Left colon (tissue), 2 donors: ENCODE measurements at regions of chr10 and their contacts with region 1.

Region 1: DNA sequence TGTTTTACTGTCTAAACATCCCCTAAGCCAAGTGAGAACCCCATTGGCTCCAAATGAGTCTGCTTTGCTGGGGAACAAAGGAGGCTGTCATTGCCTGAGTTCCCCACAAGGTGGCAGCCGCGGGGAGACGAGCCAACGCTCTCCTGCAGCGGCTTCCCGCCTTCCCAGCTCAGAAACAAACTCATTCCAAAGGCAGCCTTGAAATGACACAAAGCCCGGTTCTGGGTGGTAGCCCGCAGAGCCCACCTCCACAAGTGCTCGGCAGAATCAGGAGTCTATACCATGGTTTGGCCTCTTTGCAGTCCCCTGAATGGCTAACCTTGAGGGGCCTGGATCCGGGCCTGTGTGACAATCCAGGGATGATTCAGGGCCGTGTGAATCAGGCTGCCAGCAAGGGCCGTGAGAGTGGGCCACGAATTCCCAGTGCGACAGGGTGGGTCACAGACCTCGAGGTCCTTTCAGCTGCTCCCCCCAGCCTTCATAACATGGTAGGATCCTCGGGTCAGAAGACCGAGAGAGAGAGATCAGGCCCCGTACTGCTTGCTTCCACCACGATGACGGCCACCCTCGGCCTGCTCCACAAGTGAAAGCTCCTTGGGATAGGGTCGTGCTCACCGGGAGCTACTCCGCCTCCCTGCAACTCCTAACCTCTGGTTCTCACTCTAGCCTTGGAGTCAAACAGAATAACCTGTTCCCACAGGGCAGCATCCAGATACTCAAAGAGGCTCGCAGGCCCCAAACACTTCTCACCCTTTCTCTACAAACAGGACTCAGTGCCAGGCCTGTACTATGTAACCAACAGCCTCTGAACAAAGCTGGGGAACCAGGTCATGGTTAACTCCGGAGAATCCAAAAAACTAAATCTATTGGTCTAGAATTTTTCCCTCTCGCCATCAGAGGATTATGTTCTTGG is 79.6 kb downstream of the DLG5 start:
- DNase-seq: peak; percentile 73 to 78
- ATAC-seq: peak; percentile 40

Region 2: DNA sequence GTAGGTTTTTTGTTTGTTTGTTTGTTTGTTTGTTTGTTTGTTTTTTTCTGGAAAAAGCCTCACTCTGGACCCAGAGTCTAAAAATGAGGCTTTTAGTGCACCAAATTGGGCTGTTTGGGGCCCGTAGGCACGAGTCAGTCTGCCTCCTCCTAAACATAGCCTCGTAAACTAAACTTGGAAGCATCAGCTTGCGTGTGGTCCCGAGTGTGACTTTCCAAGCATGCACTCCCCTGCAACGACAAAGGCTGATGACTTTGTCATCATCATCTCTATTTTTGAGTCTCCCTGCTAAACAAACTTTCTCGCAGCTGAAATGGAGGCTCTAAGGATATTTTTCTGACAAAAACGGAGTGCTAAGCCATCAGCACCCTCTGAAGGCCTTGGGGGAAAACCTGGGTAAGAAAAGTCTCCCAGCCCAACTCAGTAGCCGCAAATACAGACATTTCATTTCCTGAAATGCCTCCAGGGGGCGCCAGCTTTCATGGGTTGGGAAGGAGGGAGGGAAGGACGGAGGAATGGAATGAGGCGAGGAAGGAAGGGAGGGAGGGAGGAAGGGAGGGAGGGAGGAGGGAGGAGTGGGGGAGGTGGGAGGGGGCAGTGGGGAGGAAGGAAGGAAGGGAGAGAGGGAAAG is 455.3 kb before region 1 on chr10:
- intact Hi-C with region 1: no loop called
- DNase-seq: peak; percentile 67 to 74
- ATAC-seq: peak; percentile 82

Region 3: GRCh38 chr10:77756319-77757232 is 90.4 kb before region 1 on chr10:
- intact Hi-C with region 1: no loop called
- DNase-seq: peak in 1 of 2 donors; percentile 41
- ATAC-seq: peak; percentile 53

Region 4: GRCh38 chr10:77926566-77927401 is 79.8 kb after region 1 on chr10 and contains the start of gene DLG5:
- intact Hi-C with region 1: loop called in 1 of 2 experiments (anchors 10 kb)
- DNase-seq: peak; percentile 73 to 79
- ATAC-seq: peak; percentile 88
- total RNA-seq, gene DLG5: 26.0 to 36.7 TPM

Region 5: DNA sequence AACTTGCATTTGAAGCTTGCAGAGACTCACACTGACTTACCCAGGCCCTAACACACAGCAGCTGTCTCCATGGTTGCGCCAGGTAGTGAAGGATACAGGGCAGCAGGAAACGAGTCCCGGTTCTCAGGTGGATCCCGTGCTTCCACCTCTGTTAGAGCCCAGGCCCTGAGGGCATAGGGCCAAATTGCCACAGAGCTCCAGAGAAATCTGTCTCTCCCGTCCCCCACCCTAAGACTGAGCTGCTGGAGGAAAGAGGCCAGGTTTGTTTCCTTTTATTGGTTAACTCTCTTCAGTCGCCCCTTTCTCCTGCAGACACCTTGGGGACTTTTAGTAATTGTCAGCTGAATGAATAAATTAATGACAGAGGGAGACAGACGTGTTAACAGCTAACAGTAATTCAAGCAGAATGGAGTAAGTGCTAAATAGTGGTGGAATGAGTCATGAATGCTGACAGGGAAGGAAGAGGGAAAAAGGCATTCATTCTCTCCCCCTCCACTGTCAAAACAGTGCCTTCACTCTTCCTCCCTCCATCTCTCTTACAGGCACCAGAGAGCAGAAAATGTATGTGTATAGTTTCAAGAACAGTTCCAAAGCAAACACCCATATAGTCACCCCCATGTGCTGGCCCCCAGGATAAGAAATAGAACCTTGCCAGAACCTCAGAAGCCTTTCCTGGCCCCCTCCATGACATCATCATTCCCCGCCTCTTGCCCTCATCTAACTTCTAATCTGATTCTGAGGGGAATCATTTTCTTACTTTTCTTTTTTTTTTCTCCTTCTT is 96.3 kb after region 1 on chr10:
- intact Hi-C with region 1: no loop called
- DNase-seq: peak in 1 of 2 donors; percentile 6
- ATAC-seq: no peak

Region 6: GRCh38 chr10:77974396-77975074 is 127.6 kb after region 1 on chr10:
- intact Hi-C with region 1: loop called in 1 of 2 experiments (anchors 2 kb)
- DNase-seq: peak in 1 of 2 donors; percentile 32
- ATAC-seq: peak; percentile 41

Region 7: DNA sequence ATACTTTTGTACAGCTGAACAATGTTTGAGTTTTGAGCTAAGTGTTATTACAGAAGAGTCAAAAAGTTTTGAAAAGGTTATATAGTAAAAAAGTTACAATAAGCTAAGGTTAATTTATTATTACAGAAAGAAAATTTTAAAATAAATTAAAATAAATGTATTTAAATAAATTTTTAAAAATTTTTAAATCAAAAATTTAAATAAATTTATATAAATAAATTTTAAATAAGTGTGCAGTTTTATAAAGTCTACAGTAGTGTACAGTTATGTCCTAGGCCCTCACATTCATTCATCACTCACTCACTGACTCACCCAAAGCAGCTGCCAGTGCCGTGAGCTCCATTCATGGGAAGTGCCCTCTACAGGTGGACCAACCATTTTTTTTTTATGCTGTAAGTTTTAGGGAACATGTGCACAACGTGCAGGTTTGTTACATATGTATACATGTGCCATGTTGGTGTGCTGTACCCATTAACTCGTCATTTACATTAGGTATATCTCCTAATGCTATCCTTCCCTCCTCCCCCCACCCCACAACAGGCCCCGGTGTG is 758.9 kb after region 1 on chr10:
- intact Hi-C with region 1: no loop called
- DNase-seq: no peak
- ATAC-seq: peak; percentile 61